ENCODE measurements at regions of chr1 and their contacts with region 1.

Region 1: GRCh38 chr1:177170756-177171535 is at the start of gene BRINP2:
- DNase-seq: no peak
- H3K4me3 ChIP-seq: peak within 1 kb of the TSS; percentile 5 to 32
- H3K27ac ChIP-seq: no peak within 1 kb of the TSS
- H3K4me1 ChIP-seq: peaks cover 14% of the 10 kb centered on the region
- H3K27me3 ChIP-seq: peaks cover 3% of the 10 kb centered on the region
- CTCF ChIP-seq: no peak
- POLR2A ChIP-seq: no peak
- total RNA-seq, gene BRINP2: 0.49 TPM

Region 2: GRCh38 chr1:176903474-176903873 is 267.5 kb before region 1 on chr1:
- intact Hi-C with region 1: loop called (anchors 10 kb)
- DNase-seq: no peak
- H3K4me3 ChIP-seq: no peak overlapping the region
- H3K27ac ChIP-seq: no peak overlapping the region
- H3K4me1 ChIP-seq: no peaks in the 10 kb centered on the region
- H3K27me3 ChIP-seq: no peaks in the 10 kb centered on the region
- CTCF ChIP-seq: no peak
- POLR2A ChIP-seq: no peak

Region 3: GRCh38 chr1:177229781-177230180 is 58.8 kb after region 1 on chr1:
- intact Hi-C with region 1: loop called (anchors 2 kb)
- DNase-seq: no peak
- H3K4me3 ChIP-seq: no peak overlapping the region
- H3K27ac ChIP-seq: no peak overlapping the region
- H3K4me1 ChIP-seq: no peaks in the 10 kb centered on the region
- H3K27me3 ChIP-seq: no peaks in the 10 kb centered on the region
- CTCF ChIP-seq: no peak
- POLR2A ChIP-seq: no peak